Adrenal gland (tissue), 19 donors: ENCODE measurements at regions of chr17 and their contacts with region 1.

Region 1: DNA sequence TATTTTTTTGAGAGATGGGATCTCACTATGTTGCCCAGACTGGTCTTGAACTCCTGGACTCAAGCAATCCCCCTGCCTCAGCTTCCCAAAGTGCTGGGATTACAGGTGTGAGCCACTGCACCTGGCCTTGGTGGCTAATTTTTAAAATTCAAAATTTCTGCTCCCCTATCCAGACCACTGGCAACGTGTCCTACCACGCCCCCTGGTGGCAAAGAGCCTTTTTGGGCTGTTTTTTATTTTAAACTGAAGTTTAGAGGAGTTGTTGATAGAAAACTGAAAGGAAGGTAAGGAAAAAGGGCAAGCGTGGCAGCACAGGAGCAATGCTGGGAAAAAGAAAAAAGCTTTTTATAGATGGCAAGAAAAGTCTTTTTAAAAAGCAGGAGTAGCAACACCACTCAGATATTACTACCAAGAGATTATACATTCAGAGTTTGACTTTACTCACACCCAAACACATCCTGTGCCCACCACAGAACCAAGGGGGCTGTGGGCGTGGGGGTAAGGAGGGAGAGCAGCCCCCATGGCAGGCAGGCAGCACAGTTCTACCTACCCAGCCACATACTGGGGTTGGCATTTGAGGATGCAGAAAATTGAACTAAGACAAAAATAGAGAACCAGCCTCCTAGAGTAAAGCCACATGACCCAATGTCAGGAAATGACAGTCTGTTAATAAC is 4.2 kb upstream of the MXRA7 start:
- DNase-seq: peak; percentile 71 to 91 (median 84)
- H3K4me3 ChIP-seq: no peak overlapping the region
- H3K27ac ChIP-seq: peak overlapping the region in 3 of 5 donors; percentile 28 to 80 (median 77)
- H3K4me1 ChIP-seq: peaks cover 13 to 43% of the 10 kb centered on the region in 2 donors
- H3K27me3 ChIP-seq: no peaks in the 10 kb centered on the region
- CTCF ChIP-seq: peak; percentile 75 to 85 (median 81)
- POLR2A ChIP-seq: no peak

Region 2: GRCh38 chr17:76557368-76558197 is 157.4 kb before region 1 on chr17:
- intact Hi-C with region 1: loop called (anchors 10 kb)
- DNase-seq: peak; percentile 95 to 98 (median 96)
- H3K4me3 ChIP-seq: peak overlapping the region; percentile 17 to 79 (median 52)
- H3K27ac ChIP-seq: peak overlapping the region; percentile 61 to 91 (median 81)
- H3K4me1 ChIP-seq: peaks cover 42 to 49% of the 10 kb centered on the region in 2 donors
- H3K27me3 ChIP-seq: no peaks in the 10 kb centered on the region
- CTCF ChIP-seq: peak; percentile 13 to 83 (median 67)
- POLR2A ChIP-seq: peak; percentile 30 to 76

Region 3: DNA sequence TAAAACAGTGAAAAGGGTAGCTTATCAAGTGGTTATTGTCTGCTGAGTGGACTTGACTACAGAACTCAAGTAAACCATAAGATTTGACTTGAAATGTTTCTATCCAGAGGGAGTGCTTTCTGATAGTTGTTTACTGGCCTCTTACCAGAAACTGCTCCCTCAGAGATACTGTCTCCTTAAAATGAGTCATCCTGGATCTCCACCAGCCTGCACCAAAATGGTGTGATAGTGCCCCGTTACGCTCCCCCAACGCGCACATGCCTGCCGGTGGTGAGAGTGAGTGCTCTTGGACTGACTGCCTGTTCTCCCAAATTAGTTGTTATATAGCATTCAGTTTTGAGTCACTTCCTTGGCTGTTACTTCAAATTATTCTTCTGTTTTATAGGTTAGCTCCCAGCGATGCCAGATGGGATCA is 152.2 kb before region 1 on chr17:
- intact Hi-C with region 1: loop called (anchors 10 kb)
- DNase-seq: peak in 6 of 7 donors; percentile 73 to 80 (median 76)
- H3K4me3 ChIP-seq: no peak overlapping the region
- H3K27ac ChIP-seq: peak overlapping the region in 4 of 5 donors; percentile 34 to 80 (median 50)
- H3K4me1 ChIP-seq: peaks cover 37 to 51% of the 10 kb centered on the region in 2 donors
- H3K27me3 ChIP-seq: no peaks in the 10 kb centered on the region
- CTCF ChIP-seq: no peak
- POLR2A ChIP-seq: peak in 1 of 2 donors; percentile 30

Region 4: GRCh38 chr17:76678330-76678729 is 36.6 kb before region 1 on chr17:
- intact Hi-C with region 1: loop called in 1 of 2 experiments (anchors 5 kb)
- DNase-seq: no peak
- H3K4me3 ChIP-seq: no peak overlapping the region
- H3K27ac ChIP-seq: no peak overlapping the region
- H3K4me1 ChIP-seq: peaks cover 0 to 24% of the 10 kb centered on the region in 2 donors
- H3K27me3 ChIP-seq: no peaks in the 10 kb centered on the region
- CTCF ChIP-seq: no peak
- POLR2A ChIP-seq: no peak